ENCODE measurements at regions of chr11 and their contacts with region 1.

Region 1: GRCh38 chr11:77820563-77821348 is at the starts of genes AAMDC and RSF1:
- DNase-seq: peak; percentile 95
- H3K4me3 Mint-ChIP-seq: peak within 1 kb of the TSS; percentile 97
- H3K27ac Mint-ChIP-seq: peak within 1 kb of the TSS; percentile 94
- H3K4me1 Mint-ChIP-seq: peaks cover 38% of the 10 kb centered on the region
- H3K27me3 Mint-ChIP-seq: peaks cover 2% of the 10 kb centered on the region
- total RNA-seq, gene AAMDC: 1.5 and 2.4 TPM in 2 replicates
- total RNA-seq, gene RSF1: 47.0 and 49.2 TPM in 2 replicates

Region 2: DNA sequence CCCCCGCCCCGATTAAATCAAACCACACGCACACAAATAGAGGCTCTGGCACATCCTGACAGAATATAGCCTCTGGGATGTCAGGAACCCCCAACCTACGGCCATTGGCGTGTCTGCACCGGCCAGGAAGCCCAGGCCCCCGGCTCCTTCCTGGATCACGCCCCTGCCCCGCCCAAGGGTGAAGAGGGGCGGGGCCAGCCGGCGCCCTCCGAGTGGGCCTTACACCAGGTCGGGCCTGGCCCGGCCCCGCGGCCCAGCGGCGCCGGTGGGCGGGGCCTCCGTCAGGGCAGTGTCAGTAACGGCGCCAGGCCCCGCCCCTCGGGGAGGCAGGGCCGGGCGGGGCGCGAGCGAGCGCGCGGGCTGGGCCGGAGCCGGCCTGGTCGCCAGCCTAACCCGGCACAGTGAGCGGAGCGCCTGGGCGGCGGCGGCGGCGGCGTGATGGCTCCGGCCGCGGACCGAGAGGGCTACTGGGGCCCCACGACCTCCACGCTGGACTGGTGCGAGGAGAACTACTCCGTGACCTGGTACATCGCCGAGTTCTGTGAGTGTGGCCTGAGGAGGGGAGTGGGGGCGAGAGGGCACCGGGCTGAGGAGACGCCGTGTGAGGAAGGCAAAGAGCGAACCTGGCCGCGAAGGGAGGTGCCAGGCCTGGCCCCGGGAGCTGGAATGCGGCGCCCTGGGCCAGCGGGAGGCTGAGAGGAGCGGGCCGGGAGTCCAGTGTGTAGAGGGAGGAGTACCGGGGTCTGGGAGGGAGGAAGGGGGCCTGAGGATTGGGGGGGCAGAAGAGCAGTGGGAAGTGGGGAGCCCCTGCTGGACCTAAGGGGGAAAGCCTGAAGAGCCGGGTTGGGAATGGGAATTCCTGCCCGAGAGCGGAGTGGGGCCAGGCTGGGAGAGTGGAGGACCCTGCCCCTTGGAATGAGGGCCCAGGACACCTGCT is 959.9 kb before region 1 on chr11 and contains the start of gene ACER3:
- intact Hi-C with region 1: loop called (anchors 5 kb)
- DNase-seq: peak; percentile 87
- H3K4me3 Mint-ChIP-seq: peak within 1 kb of the TSS; percentile 90
- H3K27ac Mint-ChIP-seq: peak within 1 kb of the TSS; percentile 73
- H3K4me1 Mint-ChIP-seq: peaks cover 33% of the 10 kb centered on the region
- H3K27me3 Mint-ChIP-seq: peaks cover 2% of the 10 kb centered on the region
- total RNA-seq, gene ACER3: 9.9 and 12.2 TPM in 2 replicates

Region 3: DNA sequence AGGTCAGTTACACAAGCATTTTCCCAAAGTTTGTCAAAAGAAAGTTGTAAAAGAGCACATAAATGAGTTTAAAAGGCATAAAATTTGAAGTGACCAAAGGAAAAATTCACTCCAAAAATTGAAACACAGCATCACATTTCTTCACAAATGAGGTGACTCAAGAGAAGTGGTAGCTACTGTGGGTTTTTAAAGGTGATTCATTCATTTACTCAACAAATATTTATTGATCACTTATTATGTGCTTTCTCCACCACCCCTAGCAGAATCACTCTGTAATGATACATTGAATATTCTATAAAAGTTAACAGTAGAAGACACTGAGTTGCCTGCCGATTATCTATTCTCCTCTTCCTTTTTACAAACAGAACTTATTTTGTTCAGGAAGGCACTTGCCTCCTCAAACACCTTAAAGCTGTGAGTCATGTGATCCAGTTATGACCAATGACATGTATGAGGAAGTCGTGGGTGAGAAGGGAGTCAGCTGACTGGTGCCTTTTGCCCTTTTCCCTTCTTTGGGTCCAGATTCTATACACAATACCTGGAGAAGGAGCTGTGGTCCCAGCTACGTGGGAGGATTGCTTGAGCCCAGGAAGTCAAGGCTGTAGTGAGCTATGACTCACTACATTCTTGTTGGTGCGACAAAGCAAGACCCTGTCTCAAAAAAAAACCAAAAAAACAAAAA is 115.4 kb before region 1 on chr11:
- intact Hi-C with region 1: loop called (anchors 5 kb)
- DNase-seq: no peak
- H3K4me3 Mint-ChIP-seq: no peak overlapping the region
- H3K27ac Mint-ChIP-seq: peak overlapping the region; percentile 57
- H3K4me1 Mint-ChIP-seq: peaks cover 17% of the 10 kb centered on the region
- H3K27me3 Mint-ChIP-seq: no peaks in the 10 kb centered on the region

Region 4: DNA sequence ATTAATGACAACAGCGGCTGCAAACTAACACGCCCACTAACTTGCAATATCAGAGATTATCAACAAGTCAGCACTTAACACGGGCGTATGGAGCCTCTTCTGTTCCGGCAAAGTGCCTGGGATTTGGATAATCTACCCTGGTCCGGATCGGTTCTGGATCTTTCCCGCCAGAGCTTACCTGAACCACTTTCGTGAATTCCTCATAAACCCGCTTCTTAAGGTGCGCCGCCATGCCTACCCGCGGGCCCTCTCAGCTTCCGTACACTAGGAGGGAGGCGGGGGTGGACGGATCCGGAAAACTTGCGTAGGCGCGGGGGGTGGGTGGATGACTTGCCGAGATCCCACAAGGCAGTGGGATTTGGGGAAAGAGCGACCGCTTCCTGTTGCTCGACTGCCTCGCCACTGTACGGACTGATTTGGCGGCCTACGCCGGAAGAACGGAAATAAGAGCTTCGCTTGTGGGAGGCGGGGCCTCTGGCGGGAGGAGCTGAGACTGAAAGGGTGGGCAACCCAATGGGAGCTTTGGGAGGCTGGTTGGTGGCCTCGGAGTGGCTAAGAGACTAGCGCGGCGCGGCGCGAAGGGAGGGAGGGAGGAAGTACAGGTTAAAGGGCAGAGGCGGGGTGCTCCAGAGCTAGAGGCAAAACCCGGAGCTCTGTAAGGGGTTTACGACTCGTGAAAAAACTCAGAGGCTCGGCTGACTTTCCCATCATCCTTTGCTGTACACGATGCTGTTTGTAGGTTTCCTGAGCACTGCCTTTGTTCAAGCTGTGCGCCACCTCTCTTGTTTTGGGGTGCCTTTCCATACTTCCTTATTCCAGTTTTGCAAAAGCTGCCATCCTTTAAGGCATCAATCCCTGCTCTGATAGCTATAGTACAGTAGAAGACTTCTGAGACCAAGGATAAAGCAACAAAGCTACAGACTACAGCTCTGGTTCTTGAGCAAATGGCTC is 173.9 kb after region 1 on chr11 and contains the start of gene INTS4:
- intact Hi-C with region 1: loop called (anchors 1 kb)
- DNase-seq: peak; percentile 98
- H3K4me3 Mint-ChIP-seq: peak within 1 kb of the TSS; percentile 92
- H3K27ac Mint-ChIP-seq: peak within 1 kb of the TSS; percentile 84
- H3K4me1 Mint-ChIP-seq: peaks cover 30% of the 10 kb centered on the region
- H3K27me3 Mint-ChIP-seq: no peaks in the 10 kb centered on the region
- total RNA-seq, gene INTS4: 58.2 and 63.6 TPM in 2 replicates

Region 5: DNA sequence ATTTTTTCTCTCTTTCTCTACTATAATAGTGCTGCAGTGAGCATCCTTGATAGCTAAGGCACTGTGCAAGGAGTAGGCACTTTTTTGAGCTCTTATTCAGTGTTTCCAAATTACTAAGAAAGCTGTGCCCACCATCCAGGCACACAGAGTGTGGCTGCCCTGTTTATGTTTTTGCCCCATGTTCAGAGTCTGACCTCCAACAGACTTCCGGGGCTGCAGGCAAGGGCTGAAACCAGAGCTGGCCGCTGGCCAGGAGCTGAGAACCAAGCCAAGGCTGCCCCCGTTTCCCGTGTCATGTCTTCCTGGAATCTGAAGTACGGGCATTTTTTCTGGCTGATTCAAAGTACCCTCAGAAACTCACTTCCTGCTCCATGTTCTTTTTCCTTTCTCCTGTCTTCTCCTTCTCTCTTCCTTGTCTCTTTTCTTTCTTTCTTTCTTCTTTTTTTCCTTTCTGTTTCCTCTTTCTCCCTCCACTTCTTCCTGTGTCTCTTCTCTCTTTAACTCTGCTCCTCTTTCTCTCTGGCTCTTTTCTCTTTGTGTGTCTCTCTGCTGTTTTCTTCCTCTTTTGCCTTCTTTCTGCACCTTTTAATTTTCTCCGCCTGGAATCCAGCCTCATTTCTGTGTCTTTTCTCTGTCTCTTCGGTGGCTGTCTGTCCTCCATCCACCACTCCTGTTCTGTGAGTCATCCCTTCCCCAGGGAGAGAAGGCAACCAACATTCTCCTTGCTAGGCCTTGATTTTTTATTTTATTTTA is 219.3 kb after region 1 on chr11:
- intact Hi-C with region 1: loop called (anchors 2 kb)
- DNase-seq: no peak
- H3K4me3 Mint-ChIP-seq: peak overlapping the region; percentile 8
- H3K27ac Mint-ChIP-seq: peak overlapping the region; percentile 87
- H3K4me1 Mint-ChIP-seq: peaks cover 12% of the 10 kb centered on the region
- H3K27me3 Mint-ChIP-seq: no peaks in the 10 kb centered on the region

Region 6: DNA sequence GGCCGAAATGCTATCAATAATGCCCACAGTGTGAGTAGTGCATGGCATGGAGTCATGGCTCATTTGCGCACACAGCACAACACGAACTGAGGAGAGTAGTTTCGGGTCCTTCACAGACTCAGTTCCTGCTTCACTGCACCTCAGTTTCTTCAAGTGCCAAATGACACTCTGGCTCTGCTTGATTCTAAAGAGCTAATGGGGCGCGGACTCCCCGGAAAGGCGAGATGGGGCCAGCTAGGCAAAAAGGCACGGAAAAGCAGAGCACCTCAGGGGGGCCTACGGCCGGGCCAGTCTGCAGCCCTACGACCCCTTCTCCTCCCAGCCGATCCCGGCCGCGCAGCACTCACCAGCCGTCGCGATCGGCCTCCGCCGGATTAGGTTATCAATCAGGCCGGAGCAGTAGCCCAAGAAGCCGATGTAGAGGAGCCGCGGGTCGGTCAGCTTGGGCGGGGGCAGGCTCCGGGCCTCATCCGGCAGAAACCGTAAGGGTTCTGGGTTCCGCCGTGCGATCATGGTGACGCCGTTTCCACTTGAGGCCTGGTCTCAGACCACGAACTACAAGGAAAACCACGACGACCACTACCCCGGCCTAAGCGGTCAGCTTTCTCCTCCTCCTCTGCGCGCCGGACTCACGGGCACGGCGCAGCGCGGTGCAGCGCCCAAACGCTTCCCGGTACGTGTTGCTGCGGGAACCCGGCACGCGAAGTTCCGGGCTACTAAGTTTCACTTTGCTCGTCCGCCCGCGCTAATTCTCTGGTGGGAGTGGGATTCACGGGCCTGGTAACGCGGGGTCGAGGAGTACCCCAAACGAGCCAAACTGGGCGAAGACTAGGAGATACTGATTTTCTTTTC is 258.7 kb after region 1 on chr11 and contains the start of gene NDUFC2:
- intact Hi-C with region 1: loop called (anchors 1 kb)
- DNase-seq: peak; percentile 62
- H3K4me3 Mint-ChIP-seq: peak within 1 kb of the TSS; percentile 95
- H3K27ac Mint-ChIP-seq: peak within 1 kb of the TSS; percentile 86
- H3K4me1 Mint-ChIP-seq: peaks cover 53% of the 10 kb centered on the region
- H3K27me3 Mint-ChIP-seq: no peaks in the 10 kb centered on the region
- total RNA-seq, gene NDUFC2: 208 and 220 TPM in 2 replicates

Region 7: GRCh38 chr11:78564490-78565467 is 744.0 kb after region 1 on chr11:
- intact Hi-C with region 1: loop called (anchors 5 kb)
- DNase-seq: peak; percentile 31
- H3K4me3 Mint-ChIP-seq: no peak overlapping the region
- H3K27ac Mint-ChIP-seq: peak overlapping the region; percentile 81
- H3K4me1 Mint-ChIP-seq: peaks cover 50% of the 10 kb centered on the region
- H3K27me3 Mint-ChIP-seq: no peaks in the 10 kb centered on the region